Heart left ventricle (tissue), 16 donors: ENCODE measurements at regions of chr9 and their contacts with region 1.

Region 1: GRCh38 chr9:27184556-27185351 is 75.7 kb downstream of the TEK start:
- DNase-seq: peak in 2 of 5 donors; percentile 23 to 29
- ATAC-seq: peak in 3 of 4 donors; percentile 32 to 82 (median 47)
- H3K4me3 ChIP-seq: no peak overlapping the region
- H3K27ac ChIP-seq: peak overlapping the region in 5 of 12 donors; percentile 8 to 39 (median 27)
- H3K4me1 ChIP-seq: peaks cover 0 to 25% (median 6%) of the 10 kb centered on the region in 12 donors
- H3K27me3 ChIP-seq: no peaks in the 10 kb centered on the region
- CTCF ChIP-seq: no peak
- POLR2A ChIP-seq: no peak

Region 2: DNA sequence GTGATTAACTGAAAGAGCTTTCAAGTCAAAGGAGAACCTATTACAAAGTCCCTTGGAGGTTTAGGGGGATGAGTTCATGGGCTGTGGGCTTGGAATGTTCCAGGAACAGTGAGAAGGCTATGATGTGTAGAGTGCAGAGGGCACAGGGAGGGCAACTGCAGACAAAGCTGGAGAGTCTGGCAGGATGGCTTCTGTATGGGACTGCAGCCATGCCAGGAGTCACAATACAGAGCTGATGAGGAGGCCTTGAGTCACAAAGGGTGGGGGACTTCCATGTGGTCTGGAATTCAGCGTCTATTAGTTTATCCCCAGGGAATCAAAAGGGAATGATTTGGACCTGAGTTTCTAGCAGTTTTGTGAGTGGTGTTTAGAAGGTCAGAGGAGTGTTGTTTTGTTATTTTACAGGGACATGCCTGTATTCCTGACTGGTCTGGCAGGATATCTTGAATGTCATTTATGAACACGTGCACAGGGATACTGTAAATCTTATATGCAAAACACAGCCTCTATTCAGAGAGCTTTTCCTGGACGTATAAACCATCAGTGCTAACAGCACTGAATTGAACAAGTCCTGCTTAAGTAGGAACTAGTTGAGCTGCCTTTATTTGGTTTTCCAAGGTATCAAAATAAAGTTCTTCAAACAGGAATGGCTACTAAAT is 90.0 kb before region 1 on chr9:
- intact Hi-C with region 1: no loop called
- DNase-seq: peak in 1 of 5 donors; percentile 41
- ATAC-seq: peak in 3 of 4 donors; percentile 73 to 78 (median 75)
- H3K4me3 ChIP-seq: no peak overlapping the region
- H3K27ac ChIP-seq: peak overlapping the region in 3 of 12 donors; percentile 18 to 35 (median 24)
- H3K4me1 ChIP-seq: peaks cover 0 to 10% (median 0%) of the 10 kb centered on the region in 12 donors
- H3K27me3 ChIP-seq: no peaks in the 10 kb centered on the region
- CTCF ChIP-seq: no peak
- POLR2A ChIP-seq: no peak

Region 3: DNA sequence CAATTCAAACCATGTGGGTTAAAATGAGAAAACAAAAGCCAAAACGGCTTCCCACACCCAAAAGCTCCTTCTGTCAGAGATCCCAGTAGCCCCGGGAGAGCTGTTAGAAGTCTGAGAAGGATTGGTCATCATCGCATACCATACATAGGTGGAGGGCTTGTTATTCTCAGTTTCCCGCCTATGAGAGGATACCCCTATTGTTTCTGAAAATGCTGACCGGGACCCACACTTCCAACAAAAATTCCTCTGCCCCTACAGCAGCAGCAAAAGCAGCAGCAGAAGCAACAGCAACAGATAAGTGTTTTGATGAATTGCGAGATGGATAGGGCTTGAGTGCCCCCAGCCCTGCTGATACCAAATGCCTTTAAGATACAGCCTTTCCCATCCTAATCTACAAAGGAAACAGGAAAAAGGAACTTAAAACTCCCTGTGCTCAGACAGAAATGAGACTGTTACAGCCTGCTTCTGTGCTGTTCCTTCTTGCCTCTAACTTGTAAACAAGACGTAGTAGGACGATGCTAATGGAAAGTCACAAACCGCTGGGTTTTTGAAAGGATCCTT is 75.7 kb before region 1 on chr9 and contains the start of gene TEK:
- intact Hi-C with region 1: loop called in 2 of 10 experiments (anchors 5 kb)
- DNase-seq: peak in 1 of 5 donors; percentile 19
- ATAC-seq: peak; percentile 39 to 68 (median 57)
- H3K4me3 ChIP-seq: peak within 1 kb of the TSS; percentile 1 to 64 (median 52)
- H3K27ac ChIP-seq: peak within 1 kb of the TSS; percentile 19 to 88 (median 73)
- H3K4me1 ChIP-seq: peaks cover 0 to 21% (median 0%) of the 10 kb centered on the region in 12 donors
- H3K27me3 ChIP-seq: no peaks in the 10 kb centered on the region
- CTCF ChIP-seq: no peak
- POLR2A ChIP-seq: peak in 1 of 2 donors; percentile 46
- total RNA-seq, gene TEK: 11.9 to 36.5 (median 19.2) TPM

Region 4: DNA sequence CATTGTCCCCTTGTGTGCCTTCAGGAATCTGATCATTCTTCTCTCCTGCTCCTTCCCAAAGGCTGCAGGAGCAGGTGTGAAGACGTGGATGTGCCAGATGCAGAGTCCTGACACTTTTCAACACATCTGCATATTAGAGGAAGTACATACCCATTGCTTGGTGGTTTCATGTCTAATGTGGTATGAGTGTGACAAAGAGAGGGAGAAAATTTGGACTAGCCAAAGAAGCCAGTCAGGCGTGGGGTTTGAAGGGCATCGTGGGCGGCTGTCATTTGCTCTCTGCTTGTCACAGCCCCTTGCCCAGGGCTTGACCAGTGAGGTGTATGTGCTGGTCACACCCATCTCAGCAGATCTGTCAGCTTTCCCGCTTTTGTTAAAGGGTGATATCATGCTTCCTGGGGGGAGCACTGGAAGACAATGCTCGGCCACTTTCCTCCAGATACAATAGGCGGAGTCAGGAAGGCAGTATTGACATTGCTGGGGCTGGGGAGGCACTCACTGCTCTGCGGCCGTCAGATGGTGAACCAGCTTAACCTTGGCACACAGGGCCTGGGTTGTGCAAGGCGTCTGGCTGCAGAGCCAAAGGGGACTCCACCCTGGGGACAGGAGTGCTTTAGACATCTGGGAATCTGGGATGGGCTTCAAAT is 67.1 kb before region 1 on chr9:
- intact Hi-C with region 1: loop called in 2 of 10 experiments (anchors 5 kb)
- DNase-seq: peak; percentile 74 to 90 (median 79)
- ATAC-seq: peak; percentile 90 to 97 (median 96)
- H3K4me3 ChIP-seq: no peak overlapping the region
- H3K27ac ChIP-seq: peak overlapping the region; percentile 44 to 85 (median 68)
- H3K4me1 ChIP-seq: peaks cover 0 to 49% (median 19%) of the 10 kb centered on the region in 12 donors
- H3K27me3 ChIP-seq: no peaks in the 10 kb centered on the region
- CTCF ChIP-seq: no peak
- POLR2A ChIP-seq: no peak

Region 5: GRCh38 chr9:27142299-27142930 is 42.3 kb before region 1 on chr9:
- intact Hi-C with region 1: loop called in 1 of 10 experiments (anchors 5 kb)
- DNase-seq: no peak
- ATAC-seq: peak in 1 of 4 donors; percentile 58
- H3K4me3 ChIP-seq: no peak overlapping the region
- H3K27ac ChIP-seq: no peak overlapping the region
- H3K4me1 ChIP-seq: peaks cover 0 to 28% (median 5%) of the 10 kb centered on the region in 12 donors
- H3K27me3 ChIP-seq: no peaks in the 10 kb centered on the region
- CTCF ChIP-seq: no peak
- POLR2A ChIP-seq: no peak